Activated CD4-positive, alpha-beta T cell treated with anti-CD3 and anti-CD28 coated beads for 36 hours (primary cell): ENCODE measurements at regions of chrX and their contacts with region 1.

Region 1: DNA sequence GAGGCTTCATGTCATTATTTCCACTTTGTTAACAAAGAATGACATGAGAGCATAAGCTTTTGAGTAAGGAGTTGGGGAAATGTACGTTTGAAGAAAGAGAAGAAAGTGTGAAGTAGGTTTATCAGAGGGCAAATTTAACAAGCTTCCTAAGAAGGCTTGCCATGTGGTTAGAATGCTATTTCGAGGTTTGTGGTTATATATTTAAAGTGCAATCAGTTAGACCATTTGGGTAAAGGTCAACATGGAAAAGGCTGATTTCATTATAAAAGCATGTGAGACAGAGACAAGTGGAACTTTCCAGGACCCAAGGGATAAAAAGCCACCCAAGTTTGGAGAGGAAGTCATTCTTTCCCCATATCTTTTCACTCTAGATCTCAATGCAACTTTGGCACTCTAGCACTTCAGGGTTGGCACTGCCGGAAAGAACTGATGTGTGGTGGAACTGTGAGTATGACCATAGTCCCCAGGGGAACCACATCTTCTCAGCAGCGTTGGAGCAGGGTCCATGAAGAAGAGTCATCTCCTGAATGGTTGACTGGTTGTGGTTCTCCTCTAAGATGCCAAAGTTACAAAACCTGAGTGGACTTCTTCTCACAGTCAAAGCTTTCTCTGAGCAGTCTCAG is 529.9 kb downstream of the MID1IP1 start:
- DNase-seq: peak; percentile 65
- ATAC-seq: peak; percentile 77
- H3K4me3 Mint-ChIP-seq: no peak overlapping the region
- H3K27ac Mint-ChIP-seq: peak overlapping the region; percentile 90
- H3K4me1 Mint-ChIP-seq: peaks cover 76% of the 10 kb centered on the region
- H3K27me3 Mint-ChIP-seq: no peaks in the 10 kb centered on the region

Region 2: GRCh38 chrX:39017081-39017480 is 314.1 kb before region 1 on chrX:
- CTCF ChIA-PET with region 1: no interaction called
- POLR2A ChIA-PET with region 1: no interaction called
- intact Hi-C with region 1: no loop called
- DNase-seq: no peak
- ATAC-seq: no peak
- H3K4me3 Mint-ChIP-seq: no peak overlapping the region
- H3K27ac Mint-ChIP-seq: no peak overlapping the region
- H3K4me1 Mint-ChIP-seq: no peaks in the 10 kb centered on the region
- H3K27me3 Mint-ChIP-seq: no peaks in the 10 kb centered on the region

Region 3: GRCh38 chrX:39204945-39205344 is 126.2 kb before region 1 on chrX:
- CTCF ChIA-PET with region 1: no interaction called
- POLR2A ChIA-PET with region 1: no interaction called
- intact Hi-C with region 1: loop called in 1 of 2 experiments (anchors 5 kb)
- DNase-seq: peak; percentile 75
- ATAC-seq: peak; percentile 90
- H3K4me3 Mint-ChIP-seq: peak overlapping the region; percentile 21
- H3K27ac Mint-ChIP-seq: peak overlapping the region; percentile 83
- H3K4me1 Mint-ChIP-seq: peaks cover 55% of the 10 kb centered on the region
- H3K27me3 Mint-ChIP-seq: no peaks in the 10 kb centered on the region

Region 4: DNA sequence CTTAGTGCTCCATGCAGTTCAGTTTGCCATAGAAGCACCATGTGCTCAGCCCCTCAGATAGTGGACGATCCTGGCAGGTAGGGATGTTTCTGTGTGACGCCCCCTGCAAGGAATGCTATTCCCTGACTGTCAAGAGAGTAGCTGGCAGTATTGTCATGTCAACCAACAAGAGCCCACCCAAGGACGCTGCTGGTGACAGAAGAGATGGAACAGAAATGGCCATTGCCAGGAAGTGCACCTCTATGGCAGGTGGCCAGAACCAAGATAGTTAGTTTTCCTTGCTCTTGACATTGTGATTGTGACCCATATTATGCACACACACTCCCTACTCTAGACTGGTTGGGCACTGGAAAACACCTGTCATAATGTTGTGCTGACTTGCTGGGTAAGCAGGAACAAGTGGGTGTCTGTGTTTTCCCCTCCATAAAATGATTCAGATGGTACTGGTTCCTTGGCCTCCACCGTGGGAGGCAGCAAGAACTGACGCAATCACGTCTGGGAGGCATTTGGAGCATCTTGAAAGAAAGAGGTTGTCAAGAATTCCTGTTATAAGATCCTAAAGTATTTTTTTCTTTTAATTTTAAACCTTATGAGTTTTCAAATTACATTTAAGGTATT is 22.1 kb before region 1 on chrX:
- CTCF ChIA-PET with region 1: interaction called, 3 read pairs
- POLR2A ChIA-PET with region 1: interaction called, 3 read pairs
- intact Hi-C with region 1: loop called (anchors 1 kb)
- DNase-seq: peak; percentile 77
- ATAC-seq: peak; percentile 86
- H3K4me3 Mint-ChIP-seq: peak overlapping the region; percentile 51
- H3K27ac Mint-ChIP-seq: peak overlapping the region; percentile 100
- H3K4me1 Mint-ChIP-seq: peaks cover 77% of the 10 kb centered on the region
- H3K27me3 Mint-ChIP-seq: no peaks in the 10 kb centered on the region

Region 5: DNA sequence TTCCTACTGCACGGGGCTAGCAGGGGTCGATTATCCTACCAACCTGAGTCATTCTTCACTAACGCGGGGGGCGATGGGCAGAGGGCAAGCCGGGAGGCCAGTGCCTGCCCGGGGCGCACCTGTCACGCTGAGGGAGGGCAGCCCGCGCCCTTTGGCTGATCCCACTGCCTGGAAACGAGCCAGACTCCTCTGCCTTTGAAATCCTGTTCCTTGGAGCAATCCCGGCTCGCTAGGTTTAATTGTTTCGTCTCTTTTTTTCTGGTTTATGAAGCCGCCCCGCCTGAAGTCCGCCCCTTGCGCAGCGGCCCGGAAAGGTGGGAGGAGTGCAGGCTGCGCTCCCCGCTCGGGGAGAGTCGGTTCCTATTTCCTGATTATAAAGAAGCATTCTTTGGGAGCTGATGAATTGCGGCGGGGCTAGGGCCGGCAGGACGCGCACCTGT is 282.3 kb after region 1 on chrX:
- CTCF ChIA-PET with region 1: no interaction called
- POLR2A ChIA-PET with region 1: no interaction called
- intact Hi-C with region 1: loop called in 1 of 2 experiments (anchors 2 kb)
- DNase-seq: peak; percentile 47
- ATAC-seq: peak; percentile 30
- H3K4me3 Mint-ChIP-seq: peak overlapping the region; percentile 77
- H3K27ac Mint-ChIP-seq: peak overlapping the region; percentile 89
- H3K4me1 Mint-ChIP-seq: peaks cover 33% of the 10 kb centered on the region
- H3K27me3 Mint-ChIP-seq: no peaks in the 10 kb centered on the region